A673 (cell line): ENCODE measurements at regions of chr5 and their contacts with region 1.

Region 1: DNA sequence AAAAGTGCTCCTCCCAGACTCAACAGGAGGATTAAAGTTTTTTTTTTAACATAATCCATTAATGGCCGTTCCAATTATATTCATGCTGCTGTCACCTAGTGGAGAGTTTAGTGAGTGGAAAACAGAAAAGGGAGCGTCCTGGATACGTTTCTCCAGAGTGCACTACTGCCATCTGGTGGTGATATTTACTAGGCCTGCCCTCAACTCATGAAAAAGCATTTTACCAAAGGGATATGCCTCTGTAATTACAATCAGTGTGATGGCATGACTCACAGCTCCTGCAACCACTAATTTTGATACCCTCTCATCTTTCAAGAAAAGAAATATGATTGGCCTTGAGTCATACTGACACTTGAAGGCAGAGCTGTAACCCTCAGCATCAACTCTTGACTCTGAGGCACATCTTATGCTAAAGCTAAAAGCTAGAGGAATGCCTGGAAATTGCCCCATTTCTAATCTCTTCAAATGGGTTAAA is 20.0 kb downstream of the MINAR2 start:
- DNase-seq: peak; percentile 93
- H3K4me3 ChIP-seq: no peak overlapping the region
- H3K27ac ChIP-seq: no peak overlapping the region
- H3K4me1 ChIP-seq: no peaks in the 10 kb centered on the region
- H3K27me3 ChIP-seq: peaks cover 4% of the 10 kb centered on the region
- CTCF ChIP-seq: peak; percentile 96

Region 2: DNA sequence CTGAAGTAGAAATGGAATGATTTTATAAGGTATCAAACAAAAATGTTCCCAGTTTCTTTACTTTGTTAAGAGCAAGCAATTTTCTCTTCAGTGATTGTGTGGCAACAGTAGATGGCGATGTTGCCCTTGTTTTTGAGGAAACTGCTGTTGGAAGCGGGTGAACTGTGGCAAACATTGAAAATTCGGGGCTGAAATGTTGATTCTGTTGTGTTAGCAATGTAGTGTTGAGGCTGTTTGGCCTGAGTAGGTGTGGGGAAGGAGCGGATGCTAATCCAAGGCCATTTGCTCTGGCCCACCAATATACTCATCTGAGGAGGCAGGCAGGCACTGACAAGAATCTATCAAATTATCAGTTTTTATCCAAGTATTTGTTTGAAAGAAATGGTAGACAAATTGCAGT is 1554.6 kb before region 1 on chr5:
- CTCF ChIA-PET with region 1: no interaction called
- POLR2A ChIA-PET with region 1: no interaction called
- intact Hi-C with region 1: loop called (anchors 5 kb)
- DNase-seq: peak; percentile 71
- H3K4me3 ChIP-seq: no peak overlapping the region
- H3K27ac ChIP-seq: no peak overlapping the region
- H3K4me1 ChIP-seq: no peaks in the 10 kb centered on the region
- H3K27me3 ChIP-seq: peaks cover 2% of the 10 kb centered on the region
- CTCF ChIP-seq: peak; percentile 79

Region 3: DNA sequence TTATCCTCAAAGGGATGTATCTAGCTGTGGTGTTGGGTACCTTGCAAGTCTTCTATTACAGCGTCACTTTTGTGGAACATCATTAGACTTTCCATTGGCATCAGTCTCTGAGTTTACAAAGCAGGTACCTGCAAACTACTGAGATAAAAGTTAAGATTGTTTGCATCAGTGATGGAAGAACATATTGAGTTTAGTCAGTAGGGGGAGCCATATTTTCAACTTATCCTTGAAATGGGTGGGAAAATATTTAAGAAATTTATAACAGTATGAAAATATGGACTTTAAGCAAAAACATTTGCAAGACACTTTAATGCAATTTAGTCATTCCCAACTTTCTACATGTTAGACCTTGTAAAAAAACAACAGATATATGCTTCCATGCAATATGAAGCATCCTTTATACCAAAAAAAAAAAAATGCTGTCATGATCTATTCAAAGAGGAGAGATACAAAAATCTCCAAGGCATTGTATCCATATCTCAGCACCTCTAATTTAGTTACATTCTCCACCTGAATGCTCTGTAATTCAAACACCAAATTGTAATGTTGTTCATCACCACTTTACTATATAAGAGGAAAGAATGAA is 406.4 kb before region 1 on chr5:
- CTCF ChIA-PET with region 1: no interaction called
- POLR2A ChIA-PET with region 1: no interaction called
- intact Hi-C with region 1: loop called (anchors 5 kb)
- DNase-seq: peak; percentile 26
- H3K4me3 ChIP-seq: no peak overlapping the region
- H3K27ac ChIP-seq: no peak overlapping the region
- H3K4me1 ChIP-seq: no peaks in the 10 kb centered on the region
- H3K27me3 ChIP-seq: no peaks in the 10 kb centered on the region
- CTCF ChIP-seq: peak; percentile 58

Region 4: GRCh38 chr5:129541644-129542251 is 226.2 kb before region 1 on chr5:
- CTCF ChIA-PET with region 1: no interaction called
- POLR2A ChIA-PET with region 1: no interaction called
- intact Hi-C with region 1: loop called (anchors 5 kb)
- DNase-seq: peak; percentile 57
- H3K4me3 ChIP-seq: no peak overlapping the region
- H3K27ac ChIP-seq: no peak overlapping the region
- H3K4me1 ChIP-seq: no peaks in the 10 kb centered on the region
- H3K27me3 ChIP-seq: no peaks in the 10 kb centered on the region
- CTCF ChIP-seq: peak; percentile 59

Region 5: GRCh38 chr5:129852747-129853352 is 84.9 kb after region 1 on chr5:
- CTCF ChIA-PET with region 1: interaction called, 20 read pairs
- POLR2A ChIA-PET with region 1: no interaction called
- intact Hi-C with region 1: loop called (anchors 1 kb)
- DNase-seq: peak; percentile 79
- H3K4me3 ChIP-seq: no peak overlapping the region
- H3K27ac ChIP-seq: no peak overlapping the region
- H3K4me1 ChIP-seq: no peaks in the 10 kb centered on the region
- H3K27me3 ChIP-seq: no peaks in the 10 kb centered on the region
- CTCF ChIP-seq: peak; percentile 90

Region 6: GRCh38 chr5:131005963-131006684 is 1238.2 kb after region 1 on chr5:
- CTCF ChIA-PET with region 1: no interaction called
- POLR2A ChIA-PET with region 1: no interaction called
- intact Hi-C with region 1: loop called (anchors 10 kb)
- DNase-seq: peak; percentile 45
- H3K4me3 ChIP-seq: no peak overlapping the region
- H3K27ac ChIP-seq: no peak overlapping the region
- H3K4me1 ChIP-seq: no peaks in the 10 kb centered on the region
- H3K27me3 ChIP-seq: peaks cover 63% of the 10 kb centered on the region
- CTCF ChIP-seq: peak; percentile 43

Region 7: DNA sequence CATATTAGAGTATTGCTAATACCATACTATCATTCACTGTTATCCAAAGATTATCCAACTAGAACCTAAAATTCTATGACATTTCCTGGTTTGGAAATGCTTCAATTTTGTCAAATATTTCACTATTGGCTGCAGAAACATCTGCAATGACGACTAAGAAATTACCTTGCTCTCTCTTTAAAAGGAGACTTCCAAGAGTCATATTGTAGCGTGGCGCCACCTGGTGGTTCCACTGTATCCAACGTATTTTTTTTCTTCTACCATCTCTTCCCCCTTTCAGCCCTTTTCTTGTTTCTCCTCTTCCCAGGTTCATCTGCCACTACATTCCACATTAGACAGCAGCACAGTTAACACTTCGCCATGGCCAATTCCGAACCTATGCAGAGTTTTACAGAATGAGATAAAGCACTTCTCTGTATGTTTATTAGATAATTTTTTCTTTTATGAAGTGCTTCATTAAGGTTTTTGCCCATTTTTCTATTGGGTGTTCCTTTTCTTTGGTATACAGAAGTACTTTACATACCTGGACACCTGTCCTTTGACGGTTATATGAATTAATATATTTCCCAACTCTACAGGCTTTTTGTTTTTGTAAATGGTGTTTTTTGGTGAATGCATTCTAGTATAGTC is 1649.4 kb after region 1 on chr5:
- CTCF ChIA-PET with region 1: no interaction called
- POLR2A ChIA-PET with region 1: no interaction called
- intact Hi-C with region 1: loop called (anchors 10 kb)
- DNase-seq: peak; percentile 80
- H3K4me3 ChIP-seq: no peak overlapping the region
- H3K27ac ChIP-seq: no peak overlapping the region
- H3K4me1 ChIP-seq: no peaks in the 10 kb centered on the region
- H3K27me3 ChIP-seq: no peaks in the 10 kb centered on the region
- CTCF ChIP-seq: peak; percentile 90